Dorsolateral prefrontal cortex (tissue), 120 donors: ENCODE measurements at regions of chr16 and their contacts with region 1.

Region 1: DNA sequence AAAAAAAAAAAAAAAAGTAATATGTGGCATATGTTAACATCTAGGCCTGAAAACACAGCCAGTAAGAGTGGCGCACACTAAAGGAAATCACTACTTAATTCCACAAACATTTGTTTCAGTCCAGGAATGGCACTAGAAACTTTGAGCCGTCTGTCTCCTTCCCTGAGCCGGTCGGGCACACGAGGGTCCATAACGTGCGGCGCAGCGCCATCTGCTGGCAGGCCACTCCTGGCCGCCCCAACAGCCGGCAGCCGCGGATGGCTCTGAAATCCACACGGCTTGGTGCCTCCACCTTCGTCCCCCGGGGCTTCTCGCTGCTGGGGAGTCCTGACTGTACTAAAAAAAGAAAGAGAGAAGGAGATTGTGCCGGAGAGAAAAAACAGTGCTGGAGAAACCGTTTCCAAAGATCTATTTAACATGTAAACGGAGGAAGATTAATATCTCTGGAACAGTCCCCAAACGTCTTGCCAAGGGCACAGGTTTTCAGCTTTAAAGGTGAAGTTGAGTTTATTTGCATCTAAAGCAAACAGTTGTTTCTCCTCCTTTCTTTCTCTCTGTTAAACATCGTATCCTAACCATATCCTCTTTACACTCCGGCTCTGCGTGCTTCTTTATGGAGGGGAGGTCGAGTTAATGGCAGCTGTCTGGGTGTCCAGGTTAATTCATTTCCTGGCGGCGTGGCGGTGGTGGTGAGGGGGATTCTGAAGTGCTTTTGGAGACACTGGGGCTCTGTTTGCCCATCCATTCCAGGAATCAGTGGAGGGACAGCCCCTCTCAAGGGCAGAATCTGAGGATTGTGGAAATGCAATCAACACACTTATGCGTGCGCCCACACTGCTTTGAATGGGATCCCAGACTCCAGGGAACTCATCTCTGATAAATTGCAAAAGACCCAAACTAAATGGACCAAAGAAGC is 611.3 kb upstream of the SALL1 start:
- DNase-seq: peak; percentile 26 to 90 (median 85)
- H3K4me3 ChIP-seq: peak overlapping the region in 44 of 59 donors; percentile 5 to 61 (median 38)
- H3K27ac ChIP-seq: peak overlapping the region in 4 of 59 donors; percentile 20 to 34 (median 30)
- H3K27me3 ChIP-seq: peaks cover 0 to 32% (median 3%) of the 10 kb centered on the region in 45 donors
- CTCF ChIP-seq: peak; percentile 83 to 99 (median 95)

Region 2: GRCh38 chr16:51636920-51637769 is 125.2 kb before region 1 on chr16:
- intact Hi-C with region 1: loop called in 1 of 2 experiments (anchors 10 kb)
- DNase-seq: no peak
- H3K4me3 ChIP-seq: peak overlapping the region in 57 of 59 donors; percentile 1 to 62 (median 40)
- H3K27ac ChIP-seq: no peak overlapping the region
- H3K27me3 ChIP-seq: peaks cover 0 to 25% (median 4%) of the 10 kb centered on the region in 45 donors
- CTCF ChIP-seq: peak in 6 of 56 donors; percentile 8 to 23 (median 14)

Region 3: GRCh38 chr16:51696376-51696775 is 66.0 kb before region 1 on chr16:
- intact Hi-C with region 1: no loop called
- DNase-seq: peak in 1 of 10 donors; percentile 34
- H3K4me3 ChIP-seq: no peak overlapping the region
- H3K27ac ChIP-seq: no peak overlapping the region
- H3K27me3 ChIP-seq: peaks cover 0 to 13% (median 0%) of the 10 kb centered on the region in 45 donors
- CTCF ChIP-seq: no peak

Region 4: DNA sequence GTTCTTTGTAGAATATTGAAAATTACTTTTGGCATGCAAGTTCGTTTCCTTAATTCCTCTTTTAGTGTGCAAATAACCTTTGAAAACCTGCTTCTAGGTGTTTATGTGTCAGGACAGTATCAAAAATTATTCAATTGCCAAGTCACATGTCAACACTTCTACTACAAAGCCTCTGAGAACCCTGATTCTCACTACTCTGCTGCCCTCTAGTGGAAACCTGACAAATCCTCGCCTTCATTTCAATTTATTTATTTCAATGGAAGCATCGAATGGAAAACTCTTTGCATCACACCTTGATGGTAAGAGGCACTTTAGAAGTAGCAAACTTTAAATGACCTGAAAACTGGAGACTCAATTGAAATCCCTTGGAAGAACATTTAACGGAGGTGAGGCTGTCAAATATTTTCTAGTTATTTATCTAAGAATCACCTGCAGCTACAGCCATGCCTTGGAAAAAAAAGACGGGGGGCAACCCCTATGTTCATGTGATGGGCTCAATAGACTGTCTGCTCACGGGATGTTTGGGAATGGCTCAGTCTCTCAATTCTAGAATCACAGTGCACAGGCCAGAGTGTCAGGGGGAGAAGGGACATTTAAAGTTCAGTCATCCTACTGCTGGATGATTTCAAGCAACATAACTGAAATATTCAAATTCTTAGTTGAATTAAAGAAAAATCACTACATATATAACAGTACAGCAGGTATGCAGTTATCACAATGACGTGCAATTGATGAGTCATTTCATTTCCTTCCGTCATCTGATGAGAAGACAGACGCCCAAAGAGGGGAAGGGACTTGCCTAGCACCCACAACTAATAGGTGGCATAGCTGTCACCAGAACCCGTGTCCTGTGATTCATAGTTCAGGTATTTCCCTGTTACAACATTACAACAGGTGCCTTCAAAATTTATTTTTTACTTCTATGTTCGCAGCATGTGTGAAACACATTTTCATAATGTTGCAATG is 220.7 kb after region 1 on chr16:
- intact Hi-C with region 1: loop called (anchors 2 to 5 kb)
- DNase-seq: peak in 4 of 10 donors; percentile 5 to 63 (median 34)
- H3K4me3 ChIP-seq: peak overlapping the region in 1 of 59 donors; percentile 1
- H3K27ac ChIP-seq: peak overlapping the region in 10 of 59 donors; percentile 2 to 67 (median 34)
- H3K27me3 ChIP-seq: peaks cover 0 to 6% (median 0%) of the 10 kb centered on the region in 45 donors
- CTCF ChIP-seq: peak; percentile 69 to 99 (median 89)